ENCODE measurements at regions of chr19 and their contacts with region 1.

Region 1: DNA sequence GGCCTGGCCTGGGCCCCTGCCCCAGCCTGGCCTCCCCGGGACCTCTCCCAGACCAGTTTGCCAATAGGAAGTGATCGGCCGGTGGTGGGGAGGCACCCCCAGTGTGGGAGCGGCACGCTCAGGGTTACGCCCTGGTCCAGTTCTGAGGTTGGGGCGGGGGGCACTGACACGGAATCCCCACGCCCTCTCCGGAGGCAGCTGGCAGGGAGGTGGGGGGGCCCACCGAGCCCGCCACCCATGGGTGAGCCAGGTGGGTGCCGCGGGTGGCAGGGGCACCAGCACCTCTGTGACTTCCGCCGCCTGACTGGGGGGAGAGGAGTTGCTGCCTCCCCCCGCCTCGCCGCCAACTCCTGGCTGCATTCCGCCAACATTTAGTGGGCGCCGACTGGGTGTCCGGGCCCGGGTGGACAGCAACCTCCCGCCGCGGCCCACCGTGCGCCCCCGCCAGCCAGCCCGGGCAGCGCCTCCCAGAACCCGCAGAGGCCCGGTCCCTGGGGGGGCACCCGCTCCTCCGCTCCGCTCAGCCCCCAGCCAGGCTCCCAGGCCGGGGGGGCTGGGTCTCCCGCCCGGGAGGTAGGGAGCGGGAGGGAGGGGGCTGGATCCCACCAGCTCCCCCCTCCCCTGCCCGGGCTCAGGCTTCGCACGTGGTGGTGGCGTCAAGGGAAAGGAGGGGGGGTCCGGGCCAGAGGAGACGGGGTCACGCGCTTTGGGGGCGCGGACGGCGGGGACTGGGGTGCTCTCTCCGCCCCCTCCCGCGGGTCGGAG is 2.0 kb downstream of the ZBTB7A start:
- DNase-seq: no peak
- H3K4me3 ChIP-seq: peak overlapping the region; percentile 83 to 98 (median 92)
- H3K27ac ChIP-seq: peak overlapping the region; percentile 97 to 100
- H3K4me1 ChIP-seq: peaks cover 35 to 40% of the 10 kb centered on the region in 2 donors
- H3K27me3 ChIP-seq: no peaks in the 10 kb centered on the region
- CTCF ChIP-seq: no peak
- POLR2A ChIP-seq: no peak

Region 2: GRCh38 chr19:3984908-3985642 is 79.6 kb before region 1 on chr19 and contains the start of gene EEF2:
- intact Hi-C with region 1: loop called (anchors 5 kb)
- DNase-seq: peak; percentile 85 to 92
- H3K4me3 ChIP-seq: peak within 1 kb of the TSS; percentile 96 to 98 (median 97)
- H3K27ac ChIP-seq: peak within 1 kb of the TSS; percentile 98 to 99
- H3K4me1 ChIP-seq: peaks cover 17 to 32% of the 10 kb centered on the region in 2 donors
- H3K27me3 ChIP-seq: no peaks in the 10 kb centered on the region
- CTCF ChIP-seq: no peak
- POLR2A ChIP-seq: peak; percentile 99
- total RNA-seq, gene EEF2: 1,628 to 2,598 (median 1,993) TPM

Region 3: DNA sequence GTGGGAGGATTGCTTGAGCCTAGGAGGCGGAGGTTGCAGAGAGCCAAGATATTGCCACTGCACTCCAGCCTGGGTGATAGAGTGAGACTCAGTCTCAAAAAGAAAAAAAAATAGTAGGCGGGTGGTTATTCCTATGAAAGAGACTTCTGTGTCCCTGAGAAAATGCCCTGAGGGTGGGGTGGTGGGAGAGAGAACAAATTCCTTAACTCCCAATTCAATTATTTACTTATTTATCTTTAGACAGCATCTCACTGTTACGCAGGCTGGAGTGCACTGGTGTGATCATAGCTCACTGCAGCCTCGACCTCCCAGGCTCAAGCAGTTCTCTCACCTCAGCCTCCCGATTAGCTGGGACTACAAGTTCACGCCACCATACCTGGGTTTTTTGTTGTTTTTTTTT is 69.1 kb before region 1 on chr19:
- intact Hi-C with region 1: no loop called
- DNase-seq: no peak
- H3K4me3 ChIP-seq: no peak overlapping the region
- H3K27ac ChIP-seq: no peak overlapping the region
- H3K4me1 ChIP-seq: no peaks in the 10 kb centered on the region
- H3K27me3 ChIP-seq: no peaks in the 10 kb centered on the region
- CTCF ChIP-seq: no peak
- POLR2A ChIP-seq: no peak

Region 4: GRCh38 chr19:5078182-5078581 is 1013.5 kb after region 1 on chr19:
- intact Hi-C with region 1: no loop called
- DNase-seq: no peak
- H3K4me3 ChIP-seq: no peak overlapping the region
- H3K27ac ChIP-seq: no peak overlapping the region
- H3K4me1 ChIP-seq: no peaks in the 10 kb centered on the region
- H3K27me3 ChIP-seq: no peaks in the 10 kb centered on the region
- CTCF ChIP-seq: no peak
- POLR2A ChIP-seq: no peak